ENCODE measurements at regions of chr19 and their contacts with region 1.

Region 1: GRCh38 chr19:48795055-48795684 is 15.7 kb downstream of the BCAT2 start:
- DNase-seq: peak; percentile 96 to 98
- ATAC-seq: peak; percentile 94 to 99
- H3K4me3 ChIP-seq: peak overlapping the region; percentile 43
- H3K27ac ChIP-seq: peak overlapping the region; percentile 64 to 83
- H3K4me1 ChIP-seq: peaks cover 5% of the 10 kb centered on the region; the same call in 2 of the 3 replicates
- CTCF ChIP-seq: peak; percentile 99
- EP300 ChIP-seq: no peak
- POLR2A ChIP-seq: no peak
- RAD21 ChIP-seq: peak; percentile 89 to 98

Region 2: DNA sequence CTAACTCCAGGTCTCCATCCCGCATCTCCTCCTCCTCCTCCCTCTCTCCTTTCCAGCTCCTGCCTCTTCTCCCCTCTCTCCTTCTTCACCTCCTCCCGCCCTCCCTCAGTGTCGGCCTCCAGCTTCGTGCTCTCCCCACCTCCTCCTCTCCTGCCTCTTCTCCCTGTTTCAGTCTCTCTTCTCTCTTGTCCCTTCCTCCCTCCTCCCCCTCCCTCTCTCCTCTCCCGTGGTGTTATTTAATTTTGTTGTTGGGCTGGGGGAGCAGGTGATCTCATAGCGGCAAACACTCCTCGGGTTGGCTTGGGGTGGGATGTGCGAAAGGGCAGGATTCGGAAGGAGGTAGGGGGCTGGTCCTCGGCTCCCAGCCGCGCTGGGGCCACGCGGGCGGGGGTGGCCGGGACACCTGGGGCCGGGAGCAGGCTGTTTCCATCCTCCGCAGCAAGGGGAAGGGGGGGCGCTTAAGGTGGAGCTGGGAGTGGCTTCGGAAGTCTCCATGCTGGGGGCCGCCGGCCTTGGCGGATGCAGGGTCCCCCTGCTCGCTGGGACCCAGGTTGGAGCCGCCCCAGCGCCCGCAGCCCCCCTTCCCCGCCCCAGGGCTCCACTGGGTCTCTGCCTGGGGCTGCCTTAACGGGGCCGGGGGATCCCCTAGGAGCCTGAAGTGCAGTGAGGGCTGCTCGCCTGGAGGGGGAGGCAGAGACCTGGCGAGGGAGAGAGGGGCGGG is 149.0 kb before region 1 on chr19 and contains the start of gene CA11:
- CTCF ChIA-PET with region 1: interaction called, 13 read pairs
- POLR2A ChIA-PET with region 1: interaction called, 4 read pairs
- DNase-seq: peak; percentile 91 to 97
- ATAC-seq: peak; percentile 85 to 90
- H3K4me3 ChIP-seq: peak within 1 kb of the TSS; percentile 54
- H3K27ac ChIP-seq: peak within 1 kb of the TSS; percentile 87 to 88
- H3K4me1 ChIP-seq: peaks cover 18% of the 10 kb centered on the region; the same call in 2 of the 3 replicates
- CTCF ChIP-seq: peak; percentile 90
- EP300 ChIP-seq: no peak
- POLR2A ChIP-seq: no peak; the same call in 1 of the 2 replicates
- RAD21 ChIP-seq: peak; percentile 97 to 98
- polyA plus RNA-seq, gene CA11: 8.8 and 9.8 TPM in 2 replicates

Region 3: DNA sequence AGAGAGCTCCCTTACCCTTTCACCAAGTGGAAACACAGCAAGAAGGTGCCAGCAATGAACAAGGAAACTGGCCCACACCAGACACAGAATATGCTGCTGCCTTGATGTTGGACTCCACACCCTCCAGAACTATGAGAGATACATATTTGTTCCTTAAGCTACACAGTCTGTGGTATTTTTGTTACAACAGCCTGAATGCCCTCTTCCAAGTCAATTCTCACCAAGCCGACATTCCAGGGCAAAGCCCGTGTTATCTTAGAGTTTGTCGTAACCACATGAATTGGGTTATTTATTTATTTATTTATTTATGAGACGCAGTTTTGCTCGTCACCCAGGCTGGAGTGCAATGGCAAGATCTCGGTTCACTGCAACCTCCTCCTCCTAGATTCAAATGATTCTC is 24.9 kb before region 1 on chr19:
- CTCF ChIA-PET with region 1: interaction called, 12 read pairs
- POLR2A ChIA-PET with region 1: no interaction called
- DNase-seq: no peak
- ATAC-seq: peak in 1 of 2 experiments; percentile 53; a peak in 3 of 6 replicates
- H3K4me3 ChIP-seq: no peak overlapping the region
- H3K27ac ChIP-seq: no peak overlapping the region
- H3K4me1 ChIP-seq: 0 out of 3 replicates have a peak, but pooled peaks cover 4% of the 10 kb centered on the region
- CTCF ChIP-seq: no peak
- EP300 ChIP-seq: no peak
- POLR2A ChIP-seq: no peak
- RAD21 ChIP-seq: no peak

Region 4: DNA sequence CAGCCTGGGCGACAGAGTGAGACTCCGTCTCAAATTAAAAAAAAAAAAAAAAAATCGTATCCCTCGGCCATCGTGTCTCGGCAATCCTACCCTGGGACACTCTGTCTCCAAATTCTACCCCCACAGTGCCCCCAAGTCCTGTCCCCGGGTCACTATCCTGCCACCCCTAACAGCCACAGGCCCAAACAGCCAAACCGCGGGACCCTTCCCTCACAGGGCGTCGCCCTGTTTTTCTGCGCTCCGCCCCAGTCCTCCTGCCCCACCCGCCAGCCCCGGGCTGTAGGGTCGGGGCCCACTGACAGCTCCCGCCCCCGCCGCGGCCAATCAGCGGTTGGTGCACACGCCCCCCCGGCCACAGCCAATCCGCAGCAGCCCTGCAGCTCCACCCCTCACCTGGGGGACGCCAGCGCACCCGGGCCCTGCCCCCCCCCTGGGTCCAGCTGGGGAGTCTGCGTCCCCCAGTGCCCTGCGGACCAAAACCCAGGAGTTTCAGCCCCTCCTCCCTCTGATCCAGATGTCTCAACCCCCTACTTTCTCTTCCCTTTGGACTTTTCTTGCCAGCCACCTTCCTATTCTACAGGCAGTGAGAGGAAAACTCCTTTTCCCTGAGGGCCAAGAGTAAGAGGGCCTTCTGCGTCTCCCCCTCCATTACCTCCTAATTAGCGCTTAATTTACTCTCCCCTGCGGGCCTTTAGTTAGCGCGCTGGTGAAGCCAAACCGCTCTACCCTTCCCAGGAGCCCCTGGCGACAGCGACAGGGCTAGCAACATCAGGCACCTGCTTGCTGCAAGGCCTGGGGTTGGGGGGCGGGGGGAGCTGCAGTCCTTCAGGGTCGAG is 17.1 kb after region 1 on chr19:
- CTCF ChIA-PET with region 1: interaction called, 138 read pairs
- POLR2A ChIA-PET with region 1: interaction called, 9 read pairs
- DNase-seq: peak; percentile 53 to 66
- ATAC-seq: peak; percentile 7 to 31; a peak in 3 of 6 replicates
- H3K4me3 ChIP-seq: peak overlapping the region; percentile 59; the same call in 2 of the 3 replicates
- H3K27ac ChIP-seq: peak overlapping the region in 1 of 2 experiments; percentile 87; a peak in 2 of 6 replicates
- H3K4me1 ChIP-seq: peaks cover 27% of the 10 kb centered on the region
- CTCF ChIP-seq: no peak
- EP300 ChIP-seq: no peak
- POLR2A ChIP-seq: no peak
- RAD21 ChIP-seq: no peak

Region 5: GRCh38 chr19:48826606-48827020 is 31.4 kb after region 1 on chr19:
- CTCF ChIA-PET with region 1: interaction called, 151 read pairs
- POLR2A ChIA-PET with region 1: interaction called, 3 read pairs
- DNase-seq: peak in 1 of 2 experiments; percentile 56
- ATAC-seq: peak; percentile 50 to 52; a peak in 2 of 6 replicates
- H3K4me3 ChIP-seq: no peak overlapping the region
- H3K27ac ChIP-seq: no peak overlapping the region
- H3K4me1 ChIP-seq: no peaks in the 10 kb centered on the region
- CTCF ChIP-seq: no peak
- EP300 ChIP-seq: no peak
- POLR2A ChIP-seq: no peak
- RAD21 ChIP-seq: no peak

Region 6: GRCh38 chr19:48933382-48933932 is 138.3 kb after region 1 on chr19 and contains the start of gene DHDH:
- CTCF ChIA-PET with region 1: no interaction called
- POLR2A ChIA-PET with region 1: no interaction called
- DNase-seq: peak; percentile 81 to 88
- ATAC-seq: peak; percentile 95 to 97
- H3K4me3 ChIP-seq: peak within 1 kb of the TSS; percentile 47
- H3K27ac ChIP-seq: peak within 1 kb of the TSS; percentile 55 to 79
- H3K4me1 ChIP-seq: peaks cover 6% of the 10 kb centered on the region; the same call in 2 of the 3 replicates
- CTCF ChIP-seq: no peak
- EP300 ChIP-seq: no peak
- POLR2A ChIP-seq: peak; percentile 61
- RAD21 ChIP-seq: no peak
- polyA plus RNA-seq, gene DHDH: 0.60 and 0.78 TPM in 2 replicates

Region 7: DNA sequence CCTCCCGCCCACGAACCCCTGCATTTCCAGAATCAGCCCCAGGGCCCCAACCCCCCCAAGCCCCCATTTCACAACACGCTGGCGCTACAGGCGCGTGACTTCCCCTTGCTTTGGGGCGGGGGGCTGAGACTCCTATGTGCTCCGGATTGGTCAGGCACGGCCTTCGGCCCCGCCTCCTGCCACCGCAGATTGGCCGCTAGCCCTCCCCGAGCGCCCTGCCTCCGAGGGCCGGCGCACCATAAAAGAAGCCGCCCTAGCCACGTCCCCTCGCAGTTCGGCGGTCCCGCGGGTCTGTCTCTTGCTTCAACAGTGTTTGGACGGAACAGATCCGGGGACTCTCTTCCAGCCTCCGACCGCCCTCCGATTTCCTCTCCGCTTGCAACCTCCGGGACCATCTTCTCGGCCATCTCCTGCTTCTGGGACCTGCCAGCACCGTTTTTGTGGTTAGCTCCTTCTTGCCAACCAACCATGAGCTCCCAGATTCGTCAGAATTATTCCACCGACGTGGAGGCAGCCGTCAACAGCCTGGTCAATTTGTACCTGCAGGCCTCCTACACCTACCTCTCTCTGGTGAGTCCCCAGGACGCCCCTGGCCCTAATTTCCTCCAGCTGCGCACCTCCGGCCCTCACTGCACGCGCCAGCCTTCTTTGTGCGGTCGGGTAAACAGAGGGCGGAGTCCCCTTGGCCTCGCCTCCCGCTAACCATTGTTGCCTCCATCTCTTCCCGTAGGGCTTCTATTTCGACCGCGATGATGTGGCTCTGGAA is 170.1 kb after region 1 on chr19 and contains the start of gene FTL:
- CTCF ChIA-PET with region 1: interaction called, 332 read pairs
- POLR2A ChIA-PET with region 1: interaction called, 15 read pairs
- DNase-seq: peak; percentile 99
- ATAC-seq: peak; percentile 11 to 51
- H3K4me3 ChIP-seq: peak within 1 kb of the TSS; percentile 66
- H3K27ac ChIP-seq: peak within 1 kb of the TSS; percentile 92 to 96
- H3K4me1 ChIP-seq: peaks cover 62% of the 10 kb centered on the region
- CTCF ChIP-seq: no peak
- EP300 ChIP-seq: peak in 1 of 2 experiments; percentile 58; a peak in 1 of 5 replicates
- POLR2A ChIP-seq: peak; percentile 99
- RAD21 ChIP-seq: 0 out of 5 replicates have a peak, but pooled peaks have one; percentile 18 to 21
- polyA plus RNA-seq, gene FTL: 4,743 and 7,067 TPM in 2 replicates

Measured in A549 (cell line).